ENCODE measurements at regions of chr2 and their contacts with region 1.

Region 1: GRCh38 chr2:234329202-234329960 is 167.5 kb downstream of the ARL4C start:
- DNase-seq: no peak
- H3K4me3 ChIP-seq: no peak overlapping the region
- H3K27ac ChIP-seq: no peak overlapping the region
- H3K4me1 ChIP-seq: no peaks in the 10 kb centered on the region
- H3K27me3 ChIP-seq: no peaks in the 10 kb centered on the region
- CTCF ChIP-seq: no peak

Region 2: GRCh38 chr2:234313558-234313957 is 15.8 kb before region 1 on chr2:
- intact Hi-C with region 1: loop called (anchors 1 kb)
- DNase-seq: no peak
- H3K4me3 ChIP-seq: no peak overlapping the region
- H3K27ac ChIP-seq: no peak overlapping the region
- H3K4me1 ChIP-seq: no peaks in the 10 kb centered on the region
- H3K27me3 ChIP-seq: no peaks in the 10 kb centered on the region
- CTCF ChIP-seq: no peak

Region 3: DNA sequence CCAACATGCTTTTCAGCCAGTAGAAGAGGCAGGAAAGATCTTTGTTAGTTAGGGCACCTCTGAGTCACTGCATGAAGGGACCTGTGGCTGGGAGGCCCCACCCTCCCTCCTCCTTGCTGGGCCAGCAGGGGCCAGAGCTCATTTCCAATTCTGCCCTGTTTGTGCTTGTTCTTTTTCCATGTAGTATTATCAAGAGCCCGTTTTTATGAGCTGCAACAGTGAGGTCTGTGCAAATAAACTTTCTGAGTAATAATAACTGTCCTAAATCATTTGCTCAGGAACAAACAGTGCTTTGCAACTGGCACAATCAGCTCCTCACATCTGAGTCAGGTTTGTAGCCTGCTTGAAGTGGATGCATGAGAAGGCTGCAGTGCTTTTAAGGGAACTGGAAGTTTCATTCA is 39.5 kb after region 1 on chr2:
- intact Hi-C with region 1: no loop called
- DNase-seq: peak in 1 of 2 donors; percentile 67
- H3K4me3 ChIP-seq: no peak overlapping the region
- H3K27ac ChIP-seq: no peak overlapping the region
- H3K4me1 ChIP-seq: peaks cover 0 to 7% (median 0%) of the 10 kb centered on the region in 4 donors
- H3K27me3 ChIP-seq: peaks cover 0 to 5% of the 10 kb centered on the region in 2 donors
- CTCF ChIP-seq: no peak

Measured in tibial artery (tissue), 4 donors.